ENCODE measurements at regions of chr5 and their contacts with region 1.

Region 1: DNA sequence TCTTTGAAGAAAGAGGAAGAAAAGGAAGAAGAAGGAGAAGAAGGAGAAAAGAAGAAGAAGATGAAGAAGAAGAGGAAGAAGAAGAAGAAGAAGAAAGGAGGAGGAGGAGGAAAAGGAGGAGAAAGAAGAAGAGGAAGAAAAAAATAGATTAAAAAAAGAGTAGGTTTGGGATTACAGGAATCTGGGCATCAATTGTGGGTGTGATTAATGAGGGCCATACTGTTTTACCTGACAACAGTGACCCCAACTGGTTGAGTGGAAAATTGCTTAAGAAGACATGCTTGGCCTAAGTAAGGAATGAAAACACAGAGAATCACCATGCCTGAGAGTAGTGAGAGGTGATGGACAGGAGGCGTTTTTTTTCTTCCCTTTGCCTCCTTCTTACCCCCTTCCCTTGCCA is 114.6 kb downstream of the FAM170A start:
- DNase-seq: no peak
- H3K4me3 Mint-ChIP-seq: no peak overlapping the region
- H3K27ac Mint-ChIP-seq: no peak overlapping the region
- H3K4me1 Mint-ChIP-seq: no peaks in the 10 kb centered on the region
- H3K27me3 Mint-ChIP-seq: no peaks in the 10 kb centered on the region

Region 2: GRCh38 chr5:119470851-119471451 is 273.0 kb before region 1 on chr5:
- intact Hi-C with region 1: loop called (anchors 5 kb)
- DNase-seq: no peak
- H3K4me3 Mint-ChIP-seq: no peak overlapping the region
- H3K27ac Mint-ChIP-seq: no peak overlapping the region
- H3K4me1 Mint-ChIP-seq: peaks cover 9% of the 10 kb centered on the region
- H3K27me3 Mint-ChIP-seq: no peaks in the 10 kb centered on the region